CD4-positive, alpha-beta T cell (primary cell): ENCODE measurements at regions of chr9 and their contacts with region 1.

Region 1: GRCh38 chr9:129584136-129584535 is 36.8 kb downstream of the C9orf50 start:
- DNase-seq: peak; percentile 27 to 87 (median 48)
- ATAC-seq: peak; percentile 61
- H3K4me3 ChIP-seq: no peak overlapping the region
- H3K4me3 Mint-ChIP-seq: no peak overlapping the region
- H3K27ac ChIP-seq: peak overlapping the region in 1 of 2 donors; percentile 21
- H3K27ac Mint-ChIP-seq: peak overlapping the region; percentile 70
- H3K4me1 ChIP-seq: peaks cover 71% of the 10 kb centered on the region
- H3K4me1 Mint-ChIP-seq: peaks cover 66% of the 10 kb centered on the region
- H3K27me3 ChIP-seq: no peaks in the 10 kb centered on the region
- H3K27me3 Mint-ChIP-seq: no peaks in the 10 kb centered on the region
- CTCF ChIP-seq: no peak

Region 2: DNA sequence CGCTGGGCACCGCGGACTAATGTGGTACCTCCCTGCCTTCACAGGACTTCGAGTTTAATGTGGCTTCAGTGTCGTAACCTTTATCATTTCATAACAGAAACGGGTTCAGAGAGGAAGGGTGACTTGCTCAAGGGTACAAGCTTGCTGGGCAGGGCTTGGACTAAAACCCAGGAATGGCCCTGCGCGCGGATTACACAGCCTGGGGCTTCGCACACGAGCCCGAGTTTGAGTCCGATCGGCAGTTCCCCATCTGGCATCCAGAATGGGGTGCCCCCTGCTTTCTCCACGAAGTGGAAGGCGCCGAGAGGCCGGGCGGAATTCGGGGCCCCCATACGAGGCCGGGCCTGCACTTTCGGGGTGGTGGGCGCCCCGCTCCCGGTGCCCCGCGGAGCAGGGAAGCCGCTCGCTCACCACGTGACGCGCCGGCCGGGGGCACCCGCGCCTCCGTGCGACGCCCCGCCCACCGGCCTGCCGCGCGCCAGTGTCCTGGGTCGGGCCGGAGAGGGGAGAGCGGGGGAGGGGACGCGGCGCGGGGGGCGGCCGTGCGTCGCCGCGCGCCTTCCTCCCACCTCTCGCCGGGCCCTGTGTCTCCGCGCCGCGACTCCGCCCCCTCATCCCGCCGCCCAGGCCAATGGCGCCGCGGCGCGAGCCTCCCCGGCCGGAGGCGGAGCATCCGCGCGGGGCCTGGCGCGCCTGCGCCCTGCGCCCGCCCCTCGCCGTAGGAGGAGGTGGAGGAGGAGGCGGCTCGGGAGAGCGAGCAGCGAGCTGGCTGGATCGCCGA is 895.4 kb before region 1 on chr9 and contains the start of gene SET:
- CTCF ChIA-PET with region 1: no interaction called
- POLR2A ChIA-PET with region 1: no interaction called
- intact Hi-C with region 1: no loop called
- DNase-seq: peak; percentile 82 to 97 (median 92)
- ATAC-seq: peak; percentile 78
- H3K4me3 ChIP-seq: peak within 1 kb of the TSS; percentile 89
- H3K4me3 Mint-ChIP-seq: peak within 1 kb of the TSS; percentile 95
- H3K27ac ChIP-seq: peak within 1 kb of the TSS; percentile 84
- H3K27ac Mint-ChIP-seq: peak within 1 kb of the TSS; percentile 94
- H3K4me1 ChIP-seq: peaks cover 58% of the 10 kb centered on the region
- H3K4me1 Mint-ChIP-seq: peaks cover 59% of the 10 kb centered on the region
- H3K27me3 ChIP-seq: no peaks in the 10 kb centered on the region
- H3K27me3 Mint-ChIP-seq: no peaks in the 10 kb centered on the region
- CTCF ChIP-seq: no peak
- total RNA-seq, gene SET: 228 to 241 TPM

Region 3: DNA sequence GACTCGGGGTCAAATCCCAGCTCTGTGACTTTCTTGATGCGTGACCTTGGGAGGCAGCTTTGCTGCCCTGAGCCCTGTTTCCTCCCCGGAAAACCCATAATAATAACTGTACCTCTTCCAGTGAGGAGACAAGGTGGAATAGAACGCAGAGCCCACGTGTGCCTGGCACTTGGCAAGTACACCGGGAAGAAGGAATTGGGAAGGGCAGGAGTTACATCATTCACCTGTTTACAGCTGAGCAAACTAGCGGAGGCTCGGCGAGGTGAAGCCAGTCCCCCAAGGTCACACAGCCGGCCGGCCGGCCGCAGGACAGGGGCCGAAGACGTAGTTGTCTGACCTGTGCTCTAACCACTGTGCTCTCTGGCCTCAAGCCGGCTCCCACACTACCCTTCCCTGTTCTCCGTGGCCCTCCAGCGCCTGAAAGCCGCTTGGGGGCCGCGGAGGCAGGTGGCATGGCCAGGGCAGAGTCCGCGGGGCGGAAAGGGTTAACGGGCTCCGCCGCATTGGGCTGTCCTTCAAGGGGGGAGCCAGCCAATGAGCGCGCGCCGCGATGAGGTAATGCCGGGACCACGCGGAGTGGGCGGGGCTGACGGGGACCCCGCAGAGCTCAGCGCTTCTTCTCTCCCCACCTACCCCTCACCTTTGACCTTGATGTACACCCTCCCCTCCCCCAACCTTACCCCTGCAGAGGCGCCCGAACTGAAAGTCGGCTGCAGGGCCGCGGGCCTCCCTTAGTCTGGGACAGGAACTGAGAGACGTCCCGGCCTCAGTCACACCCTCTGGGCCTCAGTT is 88.4 kb before region 1 on chr9:
- CTCF ChIA-PET with region 1: no interaction called
- POLR2A ChIA-PET with region 1: no interaction called
- intact Hi-C with region 1: loop called in 1 of 2 experiments (anchors 10 kb)
- DNase-seq: peak; percentile 58 to 91 (median 80)
- ATAC-seq: peak; percentile 82
- H3K4me3 ChIP-seq: peak overlapping the region; percentile 75
- H3K4me3 Mint-ChIP-seq: peak overlapping the region; percentile 86
- H3K27ac ChIP-seq: no peak overlapping the region
- H3K27ac Mint-ChIP-seq: peak overlapping the region; percentile 62
- H3K4me1 ChIP-seq: peaks cover 40% of the 10 kb centered on the region
- H3K4me1 Mint-ChIP-seq: peaks cover 39% of the 10 kb centered on the region
- H3K27me3 ChIP-seq: no peaks in the 10 kb centered on the region
- H3K27me3 Mint-ChIP-seq: peaks cover 3% of the 10 kb centered on the region
- CTCF ChIP-seq: no peak